ENCODE measurements at regions of chr11 and their contacts with region 1.

Region 1: DNA sequence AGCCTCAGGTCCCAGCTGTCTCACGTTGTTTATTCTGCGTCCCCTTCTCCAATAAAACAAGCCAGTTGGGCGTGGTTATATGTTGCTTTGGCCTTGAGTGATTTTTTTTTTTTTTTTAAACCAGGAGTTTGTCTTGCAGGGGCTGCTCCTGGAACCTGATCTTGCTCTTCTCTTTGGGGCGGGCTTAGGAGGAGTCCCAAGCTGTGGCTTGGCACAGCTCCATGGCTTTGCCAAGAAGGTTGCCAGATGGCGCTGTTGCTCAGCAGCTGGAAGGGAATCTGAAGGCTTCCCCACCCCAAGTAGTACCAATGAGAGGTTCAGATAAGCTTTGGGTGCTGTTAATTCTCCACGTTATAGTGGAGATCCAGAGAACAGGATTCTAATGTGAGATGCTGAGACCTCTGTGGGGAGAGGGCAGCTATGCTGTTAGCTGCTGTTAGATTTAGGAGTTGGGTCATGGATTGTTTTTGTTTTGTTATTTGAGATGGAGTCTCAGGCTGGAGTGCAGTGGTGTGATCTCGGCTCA is 2.0 kb upstream of the FERMT3 start:
- DNase-seq: peak; percentile 52
- ATAC-seq: peak; percentile 43
- H3K4me3 ChIP-seq: no peak overlapping the region
- H3K27ac ChIP-seq: peak overlapping the region; percentile 3; the same call in 1 of the 2 replicates
- H3K4me1 ChIP-seq: peaks cover 26% of the 10 kb centered on the region
- H3K27me3 ChIP-seq: no peaks in the 10 kb centered on the region
- CTCF ChIP-seq: peak; percentile 73 to 92 (median 77)
- EP300 ChIP-seq: no peak
- POLR2A ChIP-seq: peak; percentile 34; the same call in 1 of the 2 replicates
- RAD21 ChIP-seq: peak; percentile 82

Region 2: GRCh38 chr11:63888170-63889086 is 316.1 kb before region 1 on chr11:
- CTCF ChIA-PET with region 1: no interaction called
- POLR2A ChIA-PET with region 1: no interaction called
- RAD21 ChIA-PET with region 1: no interaction called
- SMC1A ChIA-PET with region 1: no interaction called
- in situ Hi-C with region 1: no loop called
- intact Hi-C with region 1: no loop called
- DNase-seq: no peak
- ATAC-seq: peak; percentile 83
- H3K4me3 ChIP-seq: peak overlapping the region; percentile 37; the same call in 1 of the 2 replicates
- H3K27ac ChIP-seq: peak overlapping the region; percentile 85
- H3K4me1 ChIP-seq: peaks cover 32% of the 10 kb centered on the region
- H3K27me3 ChIP-seq: no peaks in the 10 kb centered on the region
- CTCF ChIP-seq: no peak
- EP300 ChIP-seq: no peak
- POLR2A ChIP-seq: 0 out of 2 replicates have a peak, but pooled peaks have one; percentile 41
- RAD21 ChIP-seq: no peak

Region 3: GRCh38 chr11:64185816-64186498 is 18.6 kb before region 1 on chr11 and contains the start of gene STIP1:
- CTCF ChIA-PET with region 1: interaction called, 52 read pairs
- POLR2A ChIA-PET with region 1: interaction called, 68 read pairs
- RAD21 ChIA-PET with region 1: interaction called, 32 read pairs
- SMC1A ChIA-PET with region 1: interaction called, 15 read pairs
- in situ Hi-C with region 1: no loop called
- intact Hi-C with region 1: loop called (anchors 2 kb)
- DNase-seq: peak; percentile 100
- ATAC-seq: peak; percentile 93
- H3K4me3 ChIP-seq: peak within 1 kb of the TSS; percentile 80
- H3K27ac ChIP-seq: peak within 1 kb of the TSS; percentile 68
- H3K4me1 ChIP-seq: peaks cover 20% of the 10 kb centered on the region
- H3K27me3 ChIP-seq: no peaks in the 10 kb centered on the region
- CTCF ChIP-seq: peak; percentile 37 to 46 (median 40)
- EP300 ChIP-seq: peak in 1 of 2 experiments; percentile 94; a peak in 1 of 4 replicates
- POLR2A ChIP-seq: peak; percentile 16; the same call in 1 of the 2 replicates
- RAD21 ChIP-seq: no peak
- polyA plus RNA-seq, gene STIP1: 25.2 to 31.5 TPM

Region 4: GRCh38 chr11:64225612-64226506 is 21.3 kb after region 1 on chr11 and contains the starts of genes NUDT22 and TRPT1:
- CTCF ChIA-PET with region 1: interaction called, 59 read pairs
- POLR2A ChIA-PET with region 1: interaction called, 85 read pairs
- RAD21 ChIA-PET with region 1: interaction called, 34 read pairs
- SMC1A ChIA-PET with region 1: interaction called, 56 read pairs
- in situ Hi-C with region 1: no loop called
- intact Hi-C with region 1: no loop called
- DNase-seq: no peak
- ATAC-seq: peak; percentile 80
- H3K4me3 ChIP-seq: peak within 1 kb of the TSS; percentile 90
- H3K27ac ChIP-seq: peak within 1 kb of the TSS; percentile 96
- H3K4me1 ChIP-seq: peaks cover 18% of the 10 kb centered on the region
- H3K27me3 ChIP-seq: no peaks in the 10 kb centered on the region
- CTCF ChIP-seq: peak; percentile 25 to 48 (median 36); a peak in 4 of 6 replicates
- EP300 ChIP-seq: no peak
- POLR2A ChIP-seq: peak; percentile 71
- RAD21 ChIP-seq: no peak; the same call in 1 of the 2 replicates
- polyA plus RNA-seq, gene NUDT22: 6.7 to 20.9 TPM
- polyA plus RNA-seq, gene TRPT1: 7.1 to 21.3 TPM

Region 5: GRCh38 chr11:64240394-64241174 is 36.1 kb after region 1 on chr11 and contains the start of gene FKBP2:
- CTCF ChIA-PET with region 1: interaction called, 66 read pairs
- POLR2A ChIA-PET with region 1: interaction called, 82 read pairs
- RAD21 ChIA-PET with region 1: interaction called, 104 read pairs
- SMC1A ChIA-PET with region 1: interaction called, 40 read pairs
- in situ Hi-C with region 1: no loop called
- intact Hi-C with region 1: loop called (anchors 2 kb)
- DNase-seq: peak; percentile 87
- ATAC-seq: peak; percentile 70
- H3K4me3 ChIP-seq: peak within 1 kb of the TSS; percentile 89
- H3K27ac ChIP-seq: peak within 1 kb of the TSS; percentile 92
- H3K4me1 ChIP-seq: peaks cover 42% of the 10 kb centered on the region
- H3K27me3 ChIP-seq: no peaks in the 10 kb centered on the region
- CTCF ChIP-seq: no peak
- EP300 ChIP-seq: no peak; a peak in 1 of 4 replicates
- POLR2A ChIP-seq: peak; percentile 94
- RAD21 ChIP-seq: no peak
- polyA plus RNA-seq, gene FKBP2: 1.8 to 26.8 TPM

Region 6: GRCh38 chr11:64269380-64270234 is 65.1 kb after region 1 on chr11:
- CTCF ChIA-PET with region 1: interaction called, 65 read pairs
- POLR2A ChIA-PET with region 1: interaction called, 50 read pairs
- RAD21 ChIA-PET with region 1: interaction called, 56 read pairs
- SMC1A ChIA-PET with region 1: interaction called, 32 read pairs
- in situ Hi-C with region 1: no loop called
- intact Hi-C with region 1: no loop called
- DNase-seq: peak; percentile 98
- ATAC-seq: peak; percentile 86
- H3K4me3 ChIP-seq: peak overlapping the region; percentile 96
- H3K27ac ChIP-seq: peak overlapping the region; percentile 81
- H3K4me1 ChIP-seq: peaks cover 12% of the 10 kb centered on the region
- H3K27me3 ChIP-seq: no peaks in the 10 kb centered on the region
- CTCF ChIP-seq: peak in 1 of 3 experiments; percentile 32; a peak in 2 of 6 replicates
- EP300 ChIP-seq: no peak
- POLR2A ChIP-seq: peak; percentile 77
- RAD21 ChIP-seq: no peak

Region 7: DNA sequence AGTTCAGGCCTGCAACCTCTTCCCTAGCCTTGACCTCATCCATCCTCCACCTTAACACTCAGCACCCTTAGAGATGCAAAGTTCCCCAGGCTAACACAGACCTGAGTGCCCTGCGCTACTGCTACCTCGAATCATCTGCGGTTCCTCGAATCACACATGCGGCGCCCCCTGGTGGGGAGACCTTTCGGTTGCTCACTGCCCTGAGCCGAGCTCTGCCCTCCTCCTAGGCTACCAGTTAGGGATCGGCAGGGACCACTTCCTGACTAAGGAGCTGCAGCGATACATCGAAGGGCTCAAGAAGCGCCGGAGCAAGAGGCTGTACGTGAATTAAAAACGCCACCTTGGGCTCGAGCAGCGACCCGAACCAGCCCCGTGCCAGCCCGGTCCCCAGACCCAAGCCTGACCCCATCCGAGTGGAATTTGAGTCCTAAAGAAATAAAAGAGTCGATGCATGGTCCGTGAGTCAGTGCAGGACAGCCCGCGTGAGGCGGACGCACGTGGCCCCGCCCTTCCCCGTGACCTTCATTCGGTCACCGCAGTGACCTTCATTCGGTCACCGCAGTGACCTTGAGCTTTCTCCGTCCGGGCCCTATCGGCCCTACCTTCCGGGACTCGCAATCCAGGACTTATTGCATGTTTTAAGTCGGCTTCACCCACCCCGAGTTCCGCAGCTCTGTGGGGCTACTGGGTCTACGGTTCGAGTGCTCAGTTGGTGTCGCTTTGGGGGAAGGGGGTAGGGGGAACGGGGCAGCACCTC is 100.0 kb after region 1 on chr11:
- CTCF ChIA-PET with region 1: interaction called, 238 read pairs
- POLR2A ChIA-PET with region 1: interaction called, 70 read pairs
- RAD21 ChIA-PET with region 1: interaction called, 125 read pairs
- SMC1A ChIA-PET with region 1: interaction called, 98 read pairs
- in situ Hi-C with region 1: loop called (anchors 5 kb)
- intact Hi-C with region 1: loop called (anchors 1 kb)
- DNase-seq: peak; percentile 78
- ATAC-seq: peak; percentile 72
- H3K4me3 ChIP-seq: peak overlapping the region; percentile 72
- H3K27ac ChIP-seq: peak overlapping the region; percentile 90
- H3K4me1 ChIP-seq: peaks cover 27% of the 10 kb centered on the region
- H3K27me3 ChIP-seq: peaks cover 5 to 13% of the 10 kb centered on the region in 2 experiments; a peak in 3 of 4 replicates
- CTCF ChIP-seq: peak; percentile 89 to 94 (median 93); a peak in 5 of 6 replicates
- EP300 ChIP-seq: no peak
- POLR2A ChIP-seq: 0 out of 2 replicates have a peak, but pooled peaks have one; percentile 57
- RAD21 ChIP-seq: peak; percentile 41

Region 8: GRCh38 chr11:64331557-64332371 is 127.2 kb after region 1 on chr11:
- CTCF ChIA-PET with region 1: interaction called, 18 read pairs
- POLR2A ChIA-PET with region 1: interaction called, 6 read pairs
- RAD21 ChIA-PET with region 1: interaction called, 11 read pairs
- SMC1A ChIA-PET with region 1: interaction called, 5 read pairs
- in situ Hi-C with region 1: no loop called
- intact Hi-C with region 1: no loop called
- DNase-seq: peak; percentile 80
- ATAC-seq: peak; percentile 80
- H3K4me3 ChIP-seq: no peak overlapping the region
- H3K27ac ChIP-seq: peak overlapping the region; percentile 52
- H3K4me1 ChIP-seq: peaks cover 21% of the 10 kb centered on the region
- H3K27me3 ChIP-seq: no peaks in the 10 kb centered on the region
- CTCF ChIP-seq: peak; percentile 78 to 86 (median 82)
- EP300 ChIP-seq: peak in 1 of 2 experiments; percentile 68; a peak in 1 of 4 replicates
- POLR2A ChIP-seq: peak; percentile 53; the same call in 1 of the 2 replicates
- RAD21 ChIP-seq: peak; percentile 53

Measured in GM12878 (cell line).